Activated CD8-positive, alpha-beta memory T cell treated with anti-CD3 and anti-CD28 coated beads, Interleukin-2, amount 10 ng/mL, durations not matched to agents 7 days and 5 days (primary cell): ENCODE measurements at regions of chr21 and their contacts with region 1.

Region 1: GRCh38 chr21:41135746-41136145 is 32.2 kb upstream of the BACE2 start:
- DNase-seq: no peak
- ATAC-seq: no peak
- H3K4me3 Mint-ChIP-seq: no peak overlapping the region
- H3K27ac Mint-ChIP-seq: no peak overlapping the region
- H3K4me1 Mint-ChIP-seq: no peaks in the 10 kb centered on the region
- H3K27me3 Mint-ChIP-seq: no peaks in the 10 kb centered on the region

Region 2: DNA sequence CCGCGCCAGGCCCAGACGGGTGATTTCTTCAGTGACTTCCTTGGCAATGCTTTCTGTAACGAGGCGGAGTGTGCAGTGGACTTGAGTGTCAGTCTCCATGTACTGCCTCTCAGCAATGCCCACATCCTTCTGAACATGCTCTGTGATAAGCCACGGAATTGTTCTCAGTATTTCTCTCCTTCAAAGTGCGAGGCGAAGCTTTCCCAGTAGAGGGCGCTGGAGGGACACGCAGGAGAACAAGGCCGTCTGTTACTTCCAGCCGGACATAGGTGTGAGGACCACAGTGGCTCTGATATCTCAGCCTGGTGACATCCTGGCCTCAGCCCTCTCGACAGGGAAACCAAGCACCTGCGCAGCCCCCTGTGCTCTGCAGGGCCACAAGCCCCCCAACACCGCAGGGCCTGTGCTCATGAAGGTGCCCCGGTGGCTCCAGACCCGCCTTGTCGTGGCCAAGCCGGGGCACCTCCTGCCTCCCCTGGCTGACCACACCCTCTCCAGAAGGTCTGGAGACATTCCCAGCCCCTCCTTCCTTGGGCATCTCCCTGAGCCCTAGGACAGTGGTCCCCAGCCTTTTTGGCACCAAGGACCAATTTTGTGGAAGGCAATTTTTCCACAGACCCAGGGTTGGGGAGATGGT is 13.8 kb before region 1 on chr21:
- CTCF ChIA-PET with region 1: interaction called, 14 read pairs
- DNase-seq: peak; percentile 74
- ATAC-seq: peak; percentile 39
- H3K4me3 Mint-ChIP-seq: no peak overlapping the region
- H3K27ac Mint-ChIP-seq: no peak overlapping the region
- H3K4me1 Mint-ChIP-seq: no peaks in the 10 kb centered on the region
- H3K27me3 Mint-ChIP-seq: no peaks in the 10 kb centered on the region